PC-3 (cell line): ENCODE measurements at regions of chr18 and their contacts with region 1.

Region 1: DNA sequence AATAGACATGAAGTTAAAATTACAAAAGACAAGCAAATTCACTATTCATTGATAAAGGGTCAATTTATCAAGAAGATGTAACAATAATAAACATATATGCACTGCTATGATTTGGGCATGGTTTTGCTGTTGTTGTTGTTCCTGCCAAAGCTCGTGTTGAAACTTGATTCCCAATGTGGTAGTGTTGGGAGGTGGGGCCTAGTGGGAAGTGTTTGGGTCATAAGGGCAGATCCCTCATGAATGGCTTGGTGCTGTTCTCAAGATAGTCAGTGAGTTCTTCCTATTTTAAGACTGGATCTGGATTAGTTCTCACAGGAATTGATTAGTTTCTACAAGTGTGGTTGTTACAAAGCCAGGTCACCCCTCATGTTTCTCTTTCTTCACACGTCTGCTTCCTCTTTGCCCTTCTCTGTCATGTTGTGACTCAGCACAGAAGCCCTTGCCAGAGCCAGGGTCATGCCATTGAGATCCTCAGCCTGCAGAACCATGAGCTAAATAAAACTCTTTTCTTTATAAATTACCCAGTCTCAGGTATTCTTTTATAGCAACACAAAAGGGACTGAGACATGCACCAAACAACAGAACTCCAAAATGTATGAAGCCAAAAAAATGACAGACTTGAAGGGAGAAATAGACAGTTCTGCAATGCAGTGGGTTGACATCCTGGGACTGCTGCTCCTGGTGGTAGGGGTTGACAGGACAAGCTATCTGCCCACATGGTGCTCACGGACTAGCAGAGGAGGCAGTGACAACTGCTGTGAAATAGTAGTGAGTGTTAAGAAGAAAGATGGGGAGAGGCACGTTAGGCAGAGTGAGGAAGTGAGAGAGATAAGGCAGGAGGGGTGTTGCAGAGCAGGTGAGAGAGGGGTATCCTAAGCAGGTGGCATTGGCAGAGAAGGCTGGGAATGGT is 18.6 kb upstream of the SKA1 start:
- DNase-seq: no peak
- ATAC-seq: peak; percentile 43
- H3K4me3 ChIP-seq: no peak overlapping the region
- H3K27ac ChIP-seq: no peak overlapping the region
- H3K4me1 ChIP-seq: no peaks in the 10 kb centered on the region
- H3K27me3 ChIP-seq: no peaks in the 10 kb centered on the region
- CTCF ChIP-seq: no peak

Region 2: GRCh38 chr18:50091509-50092244 is 264.6 kb before region 1 on chr18:
- CTCF ChIA-PET with region 1: no interaction called
- POLR2A ChIA-PET with region 1: no interaction called
- intact Hi-C with region 1: no loop called
- DNase-seq: no peak
- ATAC-seq: no peak
- H3K4me3 ChIP-seq: no peak overlapping the region
- H3K27ac ChIP-seq: no peak overlapping the region
- H3K4me1 ChIP-seq: 0 out of 2 replicates have a peak, but pooled peaks cover under 1% of the 10 kb centered on the region
- H3K27me3 ChIP-seq: no peaks in the 10 kb centered on the region
- CTCF ChIP-seq: no peak

Region 3: GRCh38 chr18:50218432-50219197 is 137.7 kb before region 1 on chr18:
- CTCF ChIA-PET with region 1: interaction called, 8 read pairs
- POLR2A ChIA-PET with region 1: no interaction called
- intact Hi-C with region 1: loop called (anchors 1 kb)
- DNase-seq: peak; percentile 11
- ATAC-seq: peak; percentile 51; the same call in 1 of the 2 replicates
- H3K4me3 ChIP-seq: no peak overlapping the region
- H3K27ac ChIP-seq: no peak overlapping the region
- H3K4me1 ChIP-seq: no peaks in the 10 kb centered on the region
- H3K27me3 ChIP-seq: no peaks in the 10 kb centered on the region
- CTCF ChIP-seq: peak; percentile 50; the same call in 1 of the 2 replicates

Region 4: DNA sequence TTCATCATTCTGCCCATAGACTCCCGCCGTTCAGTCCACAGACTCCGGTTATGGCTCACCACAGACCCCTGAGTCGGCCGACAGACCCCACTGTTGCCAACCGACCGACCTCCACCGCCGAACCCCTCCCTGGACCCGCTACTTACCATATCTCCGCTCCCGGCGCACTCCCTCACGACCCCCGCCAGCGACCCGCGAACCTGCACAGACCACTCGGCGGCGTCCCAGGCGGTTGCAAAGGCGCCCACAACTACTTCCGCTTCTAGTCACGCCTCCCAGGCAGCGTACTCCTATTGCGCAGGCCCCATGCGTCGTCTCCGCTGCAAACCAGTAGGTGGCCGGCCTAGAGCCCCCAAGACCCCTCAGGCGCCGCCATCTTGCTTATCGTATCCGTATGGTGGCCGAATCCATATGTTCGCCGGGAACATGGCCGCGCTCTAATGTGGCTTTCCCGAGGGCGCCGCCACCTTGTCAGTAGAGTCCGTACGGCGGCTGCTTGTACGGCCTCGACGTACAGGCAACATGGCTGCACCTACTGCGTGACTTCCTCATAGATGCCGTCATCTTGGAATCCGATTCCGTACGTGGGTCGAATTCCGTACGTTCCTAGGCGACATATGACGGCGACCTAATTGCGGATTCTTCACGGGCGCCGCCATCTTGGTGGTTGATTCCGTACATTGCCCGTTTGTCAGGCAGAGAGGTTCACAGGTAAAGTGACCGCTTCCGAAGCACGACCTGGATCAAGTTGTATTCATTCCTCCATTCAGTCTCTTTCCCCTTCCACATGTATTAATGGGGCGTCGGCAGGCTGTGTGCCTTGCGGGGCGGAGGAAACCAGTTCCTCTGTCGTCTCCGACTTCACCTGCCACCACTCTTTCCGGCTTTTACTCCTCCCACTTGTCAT is 68.6 kb before region 1 on chr18 and contains the start of gene CXXC1:
- CTCF ChIA-PET with region 1: interaction called, 3 read pairs
- POLR2A ChIA-PET with region 1: no interaction called
- intact Hi-C with region 1: loop called (anchors 5 kb)
- DNase-seq: peak; percentile 86
- ATAC-seq: peak; percentile 89
- H3K4me3 ChIP-seq: peak within 1 kb of the TSS; percentile 81
- H3K27ac ChIP-seq: no peak within 1 kb of the TSS
- H3K4me1 ChIP-seq: 0 out of 2 replicates have a peak, but pooled peaks cover 6% of the 10 kb centered on the region
- H3K27me3 ChIP-seq: no peaks in the 10 kb centered on the region
- CTCF ChIP-seq: no peak; the same call in 1 of the 2 replicates
- total RNA-seq, gene CXXC1: 25.4 and 38.2 TPM in 2 replicates

Region 5: GRCh38 chr18:50297621-50298442 is 58.5 kb before region 1 on chr18:
- CTCF ChIA-PET with region 1: no interaction called
- POLR2A ChIA-PET with region 1: no interaction called
- intact Hi-C with region 1: no loop called
- DNase-seq: no peak
- ATAC-seq: no peak
- H3K4me3 ChIP-seq: no peak overlapping the region
- H3K27ac ChIP-seq: no peak overlapping the region
- H3K4me1 ChIP-seq: no peaks in the 10 kb centered on the region
- H3K27me3 ChIP-seq: no peaks in the 10 kb centered on the region
- CTCF ChIP-seq: no peak

Region 6: DNA sequence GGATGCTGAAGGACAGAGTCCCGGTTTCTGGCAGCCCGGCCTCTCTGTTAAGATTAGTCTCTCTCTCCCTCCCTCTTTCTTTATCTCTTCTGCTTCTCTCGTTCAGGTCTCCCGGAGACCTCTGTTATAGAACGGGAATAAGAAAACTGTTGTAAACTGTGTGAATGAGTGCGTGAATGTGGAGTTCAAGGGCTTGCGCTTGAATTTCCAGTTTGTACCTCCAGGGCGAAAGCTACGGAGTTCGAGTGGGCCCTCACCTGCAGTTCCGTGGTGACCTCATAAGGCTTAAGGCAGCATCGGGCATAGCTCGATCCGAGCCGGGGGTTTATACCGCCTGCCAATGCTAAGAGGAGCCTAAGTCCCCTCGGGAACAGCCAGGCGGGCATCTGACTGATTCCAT is 45.0 kb after region 1 on chr18:
- CTCF ChIA-PET with region 1: interaction called, 11 read pairs
- POLR2A ChIA-PET with region 1: no interaction called
- intact Hi-C with region 1: no loop called
- DNase-seq: no peak
- ATAC-seq: no peak
- H3K4me3 ChIP-seq: no peak overlapping the region
- H3K27ac ChIP-seq: no peak overlapping the region
- H3K4me1 ChIP-seq: no peaks in the 10 kb centered on the region
- H3K27me3 ChIP-seq: no peaks in the 10 kb centered on the region
- CTCF ChIP-seq: no peak